ENCODE measurements at regions of chr5 and their contacts with region 1.

Region 1: DNA sequence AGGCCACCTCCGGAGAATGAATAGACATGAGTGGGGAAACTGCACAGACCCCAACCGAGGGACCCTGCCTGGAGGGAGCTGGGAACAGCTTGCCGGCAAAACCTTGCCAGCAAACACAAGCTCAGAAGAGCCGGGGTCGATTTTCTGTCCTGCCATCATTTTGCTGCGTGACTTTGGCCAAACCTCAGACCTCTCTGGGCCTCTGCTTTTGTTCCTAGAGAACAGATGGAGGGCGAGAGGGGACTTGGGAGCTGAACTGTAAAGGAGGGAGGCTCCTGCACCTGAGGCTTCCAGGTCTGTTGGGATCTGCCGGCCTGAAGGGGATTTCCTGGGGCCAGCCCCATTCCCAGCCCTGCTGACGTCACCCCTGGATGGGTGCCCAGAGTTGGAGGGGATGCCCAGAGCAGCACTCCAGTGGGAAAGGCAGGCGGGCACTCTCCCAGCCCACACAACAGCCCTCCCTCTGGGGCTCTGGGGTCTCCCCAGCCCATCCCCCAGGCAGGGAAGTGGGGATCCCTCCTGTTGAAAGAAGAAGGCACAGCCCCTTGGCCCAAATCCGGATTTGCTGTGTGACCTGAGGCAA is 40.5 kb upstream of the SYNPO start:
- DNase-seq: peak; percentile 76
- H3K4me3 ChIP-seq: no peak overlapping the region
- H3K27ac ChIP-seq: peak overlapping the region; percentile 10 to 18 (median 14)
- H3K4me1 ChIP-seq: peaks cover 7 to 16% (median 9%) of the 10 kb centered on the region in 4 donors
- H3K27me3 ChIP-seq: no peaks in the 10 kb centered on the region
- CTCF ChIP-seq: no peak
- EP300 ChIP-seq: no peak
- POLR2A ChIP-seq: no peak

Region 2: GRCh38 chr5:149175346-149176105 is 1424.5 kb before region 1 on chr5:
- in situ Hi-C with region 1: no loop called
- intact Hi-C with region 1: loop called (anchors 5 kb)
- DNase-seq: no peak
- H3K4me3 ChIP-seq: no peak overlapping the region
- H3K27ac ChIP-seq: peak overlapping the region in 3 of 4 donors; percentile 23 to 57 (median 30)
- H3K4me1 ChIP-seq: no peaks in the 10 kb centered on the region
- H3K27me3 ChIP-seq: no peaks in the 10 kb centered on the region
- CTCF ChIP-seq: no peak
- EP300 ChIP-seq: no peak
- POLR2A ChIP-seq: no peak

Region 3: GRCh38 chr5:150560401-150561193 is 39.4 kb before region 1 on chr5:
- in situ Hi-C with region 1: no loop called
- intact Hi-C with region 1: no loop called
- DNase-seq: peak; percentile 93
- H3K4me3 ChIP-seq: no peak overlapping the region
- H3K27ac ChIP-seq: no peak overlapping the region
- H3K4me1 ChIP-seq: peaks cover 0 to 10% (median 0%) of the 10 kb centered on the region in 4 donors
- H3K27me3 ChIP-seq: no peaks in the 10 kb centered on the region
- CTCF ChIP-seq: peak; percentile 93 to 99 (median 97)
- EP300 ChIP-seq: no peak
- POLR2A ChIP-seq: no peak